Activated naive CD4-positive, alpha-beta T cell treated with anti-CD3 and anti-CD28 coated beads for 36 hours (primary cell): ENCODE measurements at regions of chr2 and their contacts with region 1.

Region 1: GRCh38 chr2:135785032-135785431 is 43.4 kb downstream of the UBXN4 start:
- DNase-seq: no peak
- H3K4me3 Mint-ChIP-seq: no peak overlapping the region
- H3K27ac Mint-ChIP-seq: no peak overlapping the region
- H3K4me1 Mint-ChIP-seq: no peaks in the 10 kb centered on the region
- H3K27me3 Mint-ChIP-seq: no peaks in the 10 kb centered on the region

Region 2: DNA sequence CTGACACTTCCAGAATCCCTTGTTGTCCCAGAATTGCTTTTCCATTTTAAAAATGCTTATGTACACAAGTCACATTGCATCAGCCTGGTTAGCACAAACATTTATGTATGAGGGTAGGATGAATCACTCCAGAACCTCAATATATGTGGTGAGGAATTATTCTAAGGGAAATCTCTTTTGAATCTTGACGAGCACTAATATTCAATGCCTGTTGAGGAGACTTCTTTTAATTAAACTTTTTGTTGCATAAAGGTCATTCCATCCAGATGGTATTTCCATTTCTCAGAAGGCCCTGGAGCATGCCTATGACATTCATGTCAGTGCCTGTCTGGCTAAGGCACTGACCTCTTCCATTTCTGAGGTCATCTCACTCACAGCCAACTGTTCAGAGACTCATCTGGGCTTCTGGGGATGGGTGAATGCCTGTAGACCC is 918.5 kb before region 1 on chr2:
- CTCF ChIA-PET with region 1: no interaction called
- intact Hi-C with region 1: no loop called
- DNase-seq: no peak
- H3K4me3 Mint-ChIP-seq: no peak overlapping the region
- H3K27ac Mint-ChIP-seq: no peak overlapping the region
- H3K4me1 Mint-ChIP-seq: no peaks in the 10 kb centered on the region
- H3K27me3 Mint-ChIP-seq: no peaks in the 10 kb centered on the region

Region 3: GRCh38 chr2:135762022-135762421 is 23.0 kb before region 1 on chr2:
- CTCF ChIA-PET with region 1: no interaction called
- intact Hi-C with region 1: no loop called
- DNase-seq: no peak
- H3K4me3 Mint-ChIP-seq: no peak overlapping the region
- H3K27ac Mint-ChIP-seq: no peak overlapping the region
- H3K4me1 Mint-ChIP-seq: peaks cover 14% of the 10 kb centered on the region
- H3K27me3 Mint-ChIP-seq: no peaks in the 10 kb centered on the region

Region 4: GRCh38 chr2:135845257-135845656 is 60.2 kb after region 1 on chr2:
- CTCF ChIA-PET with region 1: no interaction called
- intact Hi-C with region 1: loop called (anchors 5 kb)
- DNase-seq: no peak
- H3K4me3 Mint-ChIP-seq: no peak overlapping the region
- H3K27ac Mint-ChIP-seq: no peak overlapping the region
- H3K4me1 Mint-ChIP-seq: peaks cover 16% of the 10 kb centered on the region
- H3K27me3 Mint-ChIP-seq: no peaks in the 10 kb centered on the region